Left ventricle myocardium superior (tissue), 1 donor: ENCODE measurements at regions of chr20 and their contacts with region 1.

Region 1: GRCh38 chr20:37392421-37393178 is 46.7 kb downstream of the SRC start:
- DNase-seq: peak; percentile 23
- ATAC-seq: no peak

Region 2: DNA sequence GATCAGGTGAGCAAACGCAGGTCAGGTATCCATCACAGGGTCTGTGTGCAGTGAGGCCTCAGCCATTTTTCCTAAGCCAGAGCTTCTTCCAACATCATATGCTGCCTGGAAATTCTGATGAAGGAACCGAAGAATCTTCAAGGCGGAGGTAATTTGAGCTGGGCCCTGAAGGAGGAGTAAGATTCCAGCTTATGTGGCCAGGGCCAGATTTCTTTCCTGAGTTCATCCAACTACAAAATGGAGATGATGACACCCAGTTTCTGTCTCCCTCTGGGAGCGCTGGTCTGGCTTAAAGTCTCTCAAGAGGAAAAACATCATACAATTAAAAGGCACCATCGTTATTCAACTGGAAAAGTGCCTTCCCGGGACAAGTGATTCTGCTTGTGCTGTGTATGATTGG is 110.0 kb before region 1 on chr20:
- intact Hi-C with region 1: loop called (anchors 10 kb)
- DNase-seq: no peak
- ATAC-seq: no peak

Region 3: DNA sequence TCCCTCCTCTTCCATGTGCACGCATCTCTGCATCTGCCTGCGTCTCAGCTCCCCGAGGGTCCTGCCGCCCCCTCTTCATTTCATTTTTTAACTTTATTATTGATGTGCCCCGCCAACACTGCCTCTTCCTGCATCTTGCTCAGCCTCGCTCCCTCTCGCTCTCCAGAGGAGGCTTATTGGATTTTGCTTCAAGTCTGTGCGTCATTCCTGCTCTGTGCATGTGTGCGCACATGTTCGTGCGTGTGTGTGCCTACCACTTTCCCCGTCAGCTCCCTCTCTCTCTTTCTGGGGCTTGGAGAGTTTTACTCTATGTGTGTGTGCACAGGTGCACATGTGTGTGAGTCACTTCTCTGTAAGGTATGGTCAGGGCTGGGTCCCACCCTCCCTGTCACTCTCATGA is 56.7 kb after region 1 on chr20:
- intact Hi-C with region 1: no loop called
- DNase-seq: no peak
- ATAC-seq: no peak

Region 4: DNA sequence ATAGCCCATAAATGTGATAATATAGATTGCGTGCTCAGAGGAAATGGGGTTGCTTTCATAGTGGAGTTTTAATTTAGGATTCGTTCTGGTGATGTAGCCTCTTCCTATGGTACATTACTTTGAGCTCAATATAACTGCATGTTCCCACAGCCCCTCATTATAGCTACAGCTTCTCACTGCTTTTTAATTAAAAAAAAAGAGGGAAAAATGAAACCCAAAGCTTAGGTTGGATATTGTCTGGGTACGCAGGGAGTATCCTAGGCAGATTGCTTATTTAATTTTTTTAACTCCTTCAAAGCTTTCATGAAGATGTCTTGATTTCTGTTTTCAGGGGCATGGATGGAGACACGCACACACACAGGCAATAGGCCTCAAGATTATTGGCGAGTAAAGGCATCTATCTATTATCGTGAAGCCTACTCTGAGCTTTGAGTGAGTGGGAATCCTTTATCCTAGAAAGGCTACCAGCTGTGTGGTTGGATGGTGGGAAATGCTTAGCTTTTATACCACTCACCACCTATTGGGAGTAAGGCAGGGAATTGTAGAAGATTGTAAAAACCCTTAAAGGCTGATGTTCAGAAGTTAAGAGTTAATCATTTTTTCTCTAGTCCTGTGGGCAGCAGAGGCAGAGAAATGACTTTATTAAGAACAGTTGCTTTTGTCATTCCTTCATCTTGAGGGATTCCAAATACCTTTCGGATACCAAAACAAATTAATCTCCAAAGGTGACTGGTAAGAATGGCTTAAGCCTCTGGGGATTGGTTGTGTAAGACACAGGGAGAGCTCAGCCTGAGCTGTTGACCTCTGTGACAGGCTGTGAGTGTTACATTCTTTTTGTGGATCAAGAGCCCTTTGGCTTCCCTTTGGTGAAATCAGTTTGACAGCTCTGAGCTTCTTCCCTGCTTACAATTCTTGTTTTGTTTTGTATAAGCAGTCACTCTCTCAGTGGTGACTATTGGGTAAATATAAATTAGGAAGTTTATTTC is 334.7 kb after region 1 on chr20:
- intact Hi-C with region 1: no loop called
- DNase-seq: no peak
- ATAC-seq: peak; percentile 88